ENCODE measurements at regions of chr10 and their contacts with region 1.

Region 1: GRCh38 chr10:3873728-3874461 is 88.9 kb upstream of the KLF6 start:
- DNase-seq: peak in 8 of 9 donors; percentile 8 to 85 (median 74)
- ATAC-seq: peak; percentile 77
- H3K4me3 ChIP-seq: no peak overlapping the region
- H3K4me3 Mint-ChIP-seq: peak overlapping the region in 7 of 10 donors; percentile 14 to 73 (median 46)
- H3K27ac ChIP-seq: peak overlapping the region; percentile 65
- H3K27ac Mint-ChIP-seq: peak overlapping the region; percentile 87 to 95 (median 91)
- H3K4me1 ChIP-seq: peaks cover 41 to 51% of the 10 kb centered on the region in 2 donors
- H3K4me1 Mint-ChIP-seq: peaks cover 30 to 59% (median 57%) of the 10 kb centered on the region in 7 donors
- H3K27me3 ChIP-seq: no peaks in the 10 kb centered on the region
- H3K27me3 Mint-ChIP-seq: no peaks in the 10 kb centered on the region

Region 2: GRCh38 chr10:3172446-3173170 is 701.3 kb before region 1 on chr10 and contains the start of gene PITRM1:
- CTCF ChIA-PET with region 1: no interaction called
- POLR2A ChIA-PET with region 1: no interaction called
- intact Hi-C with region 1: loop called in 1 of 2 experiments (anchors 10 kb)
- DNase-seq: peak; percentile 98 to 99 (median 99)
- ATAC-seq: peak; percentile 92
- H3K4me3 ChIP-seq: peak within 1 kb of the TSS; percentile 77
- H3K4me3 Mint-ChIP-seq: peak within 1 kb of the TSS; percentile 73 to 95 (median 88)
- H3K27ac ChIP-seq: peak within 1 kb of the TSS; percentile 82
- H3K27ac Mint-ChIP-seq: peak within 1 kb of the TSS; percentile 64 to 93 (median 88)
- H3K4me1 ChIP-seq: peaks cover 5 to 6% of the 10 kb centered on the region in 2 donors
- H3K4me1 Mint-ChIP-seq: peaks cover 9 to 31% (median 23%) of the 10 kb centered on the region in 7 donors
- H3K27me3 ChIP-seq: no peaks in the 10 kb centered on the region
- H3K27me3 Mint-ChIP-seq: peaks cover 0 to 33% (median 0%) of the 10 kb centered on the region in 5 donors
- total RNA-seq, gene PITRM1: 56.5 to 90.8 (median 85.4) TPM

Region 3: GRCh38 chr10:3805791-3806461 is 68.0 kb before region 1 on chr10:
- CTCF ChIA-PET with region 1: no interaction called
- POLR2A ChIA-PET with region 1: no interaction called
- intact Hi-C with region 1: loop called (anchors 1 kb)
- DNase-seq: peak in 3 of 9 donors; percentile 13 to 53 (median 31)
- ATAC-seq: no peak
- H3K4me3 ChIP-seq: peak overlapping the region; percentile 38
- H3K4me3 Mint-ChIP-seq: peak overlapping the region; percentile 14 to 86 (median 70)
- H3K27ac ChIP-seq: peak overlapping the region; percentile 82
- H3K27ac Mint-ChIP-seq: peak overlapping the region in 3 of 9 donors; percentile 97 to 99 (median 99)
- H3K4me1 ChIP-seq: peaks cover 70 to 83% of the 10 kb centered on the region in 2 donors
- H3K4me1 Mint-ChIP-seq: peaks cover 43 to 81% (median 74%) of the 10 kb centered on the region in 7 donors
- H3K27me3 ChIP-seq: no peaks in the 10 kb centered on the region
- H3K27me3 Mint-ChIP-seq: no peaks in the 10 kb centered on the region

Region 4: DNA sequence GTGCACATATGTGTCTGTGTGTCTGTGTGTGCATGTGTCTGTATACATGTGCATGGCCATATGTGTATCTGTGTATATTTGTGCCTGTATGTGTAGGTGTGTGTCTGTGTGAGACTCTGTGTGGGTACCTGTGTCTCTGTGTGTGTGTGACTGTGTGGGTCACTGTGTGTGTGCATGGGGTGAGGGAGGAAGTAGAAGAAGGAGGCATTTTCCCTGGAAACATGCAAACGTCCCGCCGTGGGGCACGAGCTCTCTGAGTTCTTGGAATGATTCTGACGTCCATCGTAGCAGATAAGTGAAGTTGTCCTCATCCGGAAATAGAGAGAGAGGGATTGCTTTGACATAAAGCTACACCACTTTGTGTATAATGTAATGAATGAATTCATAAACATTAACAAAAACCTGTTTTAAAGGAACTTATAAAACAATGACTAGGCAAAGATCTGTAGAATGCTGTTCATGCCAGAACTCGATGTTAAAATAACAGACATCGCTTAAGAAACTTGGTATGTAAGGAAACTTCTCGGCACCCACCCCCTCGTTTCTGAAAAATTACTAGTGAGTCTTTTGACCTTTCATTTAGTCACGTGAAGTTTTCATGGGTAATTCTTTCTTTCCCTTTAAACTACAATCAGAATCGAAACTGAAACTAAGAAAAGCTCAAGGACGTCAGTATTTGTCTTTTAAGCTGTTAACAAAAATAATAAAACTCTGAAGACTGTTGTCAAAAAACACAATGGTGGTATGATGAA is 45.3 kb before region 1 on chr10:
- CTCF ChIA-PET with region 1: no interaction called
- POLR2A ChIA-PET with region 1: interaction called, 3 read pairs
- intact Hi-C with region 1: loop called in 1 of 2 experiments (anchors 2 kb)
- DNase-seq: peak in 6 of 9 donors; percentile 40 to 66 (median 54)
- ATAC-seq: peak; percentile 63
- H3K4me3 ChIP-seq: peak overlapping the region; percentile 65
- H3K4me3 Mint-ChIP-seq: peak overlapping the region; percentile 73 to 88 (median 78)
- H3K27ac ChIP-seq: peak overlapping the region; percentile 73
- H3K27ac Mint-ChIP-seq: peak overlapping the region; percentile 80 to 92 (median 90)
- H3K4me1 ChIP-seq: peaks cover 15 to 17% of the 10 kb centered on the region in 2 donors
- H3K4me1 Mint-ChIP-seq: peaks cover 12 to 54% (median 22%) of the 10 kb centered on the region in 7 donors
- H3K27me3 ChIP-seq: no peaks in the 10 kb centered on the region
- H3K27me3 Mint-ChIP-seq: no peaks in the 10 kb centered on the region

Region 5: DNA sequence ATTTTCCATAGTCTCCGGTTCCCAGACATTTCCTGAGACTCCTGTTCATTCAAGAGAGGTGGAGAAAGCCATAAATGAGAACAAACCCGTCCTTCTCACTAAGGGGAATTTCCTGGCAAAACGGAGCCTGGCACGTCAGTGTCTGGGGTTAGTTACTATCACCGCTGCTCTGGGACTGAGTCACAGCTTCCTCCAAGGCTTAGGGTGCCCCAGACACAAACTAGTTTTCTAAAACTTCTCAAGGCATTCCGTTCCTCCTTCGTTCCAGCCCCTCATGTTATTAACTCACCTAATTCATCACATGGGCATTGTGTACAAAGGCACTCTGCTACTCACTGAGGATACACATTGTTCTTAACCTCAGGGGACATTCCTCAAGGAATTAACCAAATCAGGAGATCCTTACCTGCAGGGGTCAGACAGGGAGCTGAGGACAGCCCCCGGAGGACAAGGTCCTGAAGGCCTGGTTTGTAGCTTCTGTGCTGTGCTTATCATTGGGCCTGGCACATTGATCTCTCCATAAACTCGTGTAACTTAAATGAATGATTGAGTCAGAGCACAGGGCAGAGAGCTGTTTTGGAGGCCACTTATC is 14.1 kb after region 1 on chr10:
- CTCF ChIA-PET with region 1: no interaction called
- POLR2A ChIA-PET with region 1: interaction called, 3 read pairs
- intact Hi-C with region 1: loop called in 1 of 2 experiments (anchors 1 kb)
- DNase-seq: no peak
- ATAC-seq: peak; percentile 85
- H3K4me3 ChIP-seq: no peak overlapping the region
- H3K4me3 Mint-ChIP-seq: peak overlapping the region in 1 of 10 donors; percentile 62
- H3K27ac ChIP-seq: no peak overlapping the region
- H3K27ac Mint-ChIP-seq: peak overlapping the region in 1 of 9 donors; percentile 84
- H3K4me1 ChIP-seq: peaks cover 0 to 32% of the 10 kb centered on the region in 2 donors
- H3K4me1 Mint-ChIP-seq: peaks cover 4 to 43% (median 10%) of the 10 kb centered on the region in 7 donors
- H3K27me3 ChIP-seq: no peaks in the 10 kb centered on the region
- H3K27me3 Mint-ChIP-seq: peaks cover 0 to 5% (median 0%) of the 10 kb centered on the region in 5 donors

Region 6: DNA sequence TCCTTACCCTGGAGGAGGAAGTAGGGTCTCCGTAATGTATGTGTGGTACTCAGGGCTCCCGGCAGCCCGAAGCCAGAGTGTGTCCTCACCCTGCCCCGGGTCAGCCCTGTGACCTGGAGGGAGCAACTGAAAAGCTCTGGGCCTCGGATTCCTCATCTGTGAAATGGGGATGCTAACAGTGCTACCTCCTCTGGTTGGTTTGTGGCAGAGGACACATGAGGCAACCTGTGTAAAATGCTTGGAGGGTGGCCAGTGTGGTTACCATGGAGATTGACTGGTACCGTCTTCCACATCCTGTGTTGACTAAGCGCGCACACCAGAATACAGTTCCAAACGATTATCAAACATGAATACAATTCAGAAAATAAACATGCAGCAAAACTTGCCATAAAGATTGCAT is 74.9 kb after region 1 on chr10:
- CTCF ChIA-PET with region 1: interaction called, 4 read pairs
- POLR2A ChIA-PET with region 1: interaction called, 3 read pairs
- intact Hi-C with region 1: loop called in 1 of 2 experiments (anchors 2 kb)
- DNase-seq: peak; percentile 21 to 79 (median 61)
- ATAC-seq: peak; percentile 94
- H3K4me3 ChIP-seq: no peak overlapping the region
- H3K4me3 Mint-ChIP-seq: peak overlapping the region in 9 of 10 donors; percentile 16 to 67 (median 47)
- H3K27ac ChIP-seq: no peak overlapping the region
- H3K27ac Mint-ChIP-seq: peak overlapping the region; percentile 32 to 97 (median 78)
- H3K4me1 ChIP-seq: peaks cover 20 to 59% of the 10 kb centered on the region in 2 donors
- H3K4me1 Mint-ChIP-seq: peaks cover 14 to 60% (median 36%) of the 10 kb centered on the region in 7 donors
- H3K27me3 ChIP-seq: no peaks in the 10 kb centered on the region
- H3K27me3 Mint-ChIP-seq: no peaks in the 10 kb centered on the region